ENCODE measurements at regions of chr16 and their contacts with region 1.

Region 1: GRCh38 chr16:73792199-73793020 is 504.2 kb upstream of the PSMD7 start:
- DNase-seq: no peak
- H3K4me3 ChIP-seq: no peak overlapping the region
- H3K27ac ChIP-seq: no peak overlapping the region
- H3K4me1 ChIP-seq: peaks cover 13 to 29% of the 10 kb centered on the region in 2 donors
- H3K27me3 ChIP-seq: no peaks in the 10 kb centered on the region
- CTCF ChIP-seq: no peak

Region 2: DNA sequence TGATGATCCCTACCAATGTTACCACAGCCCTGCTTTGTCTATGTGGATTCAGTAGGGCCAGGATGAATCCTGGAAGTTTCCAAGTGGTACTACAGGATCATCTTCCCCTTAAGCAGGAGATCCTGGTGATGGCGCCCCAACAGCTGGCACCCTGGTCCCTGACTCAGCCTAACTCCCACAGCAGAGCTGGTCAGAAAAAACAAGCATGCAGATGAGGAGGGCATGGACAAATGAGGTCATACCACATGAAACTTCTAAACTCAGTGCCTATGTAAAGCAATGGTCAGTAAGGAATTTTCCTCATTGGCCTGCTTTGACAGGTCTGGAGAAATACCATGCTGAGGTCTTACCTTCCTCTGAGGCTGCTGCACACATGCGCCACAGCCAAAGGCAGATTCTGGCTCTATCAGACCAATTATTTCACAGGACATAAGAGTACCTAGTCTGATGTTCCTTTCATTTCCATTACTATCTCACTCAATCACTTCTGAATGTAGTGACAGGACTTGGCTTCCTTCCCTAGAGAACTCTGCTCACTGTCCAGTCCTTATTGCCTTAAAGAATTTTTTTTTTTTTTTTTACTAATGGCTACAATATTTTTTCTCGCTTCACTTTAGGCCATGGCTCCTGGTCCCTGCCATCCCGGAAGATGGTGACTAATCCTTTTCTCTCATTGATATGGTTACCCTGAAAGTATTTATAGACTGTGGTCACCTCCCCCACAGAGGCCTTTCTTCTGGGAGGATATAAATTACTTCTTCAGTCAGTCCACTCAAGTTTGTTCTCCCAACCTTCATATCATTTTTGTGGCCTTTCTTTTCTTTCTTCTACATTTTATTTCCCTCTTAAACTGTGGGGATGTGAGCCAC is 21.0 kb before region 1 on chr16:
- intact Hi-C with region 1: loop called (anchors 2 kb)
- DNase-seq: no peak
- H3K4me3 ChIP-seq: no peak overlapping the region
- H3K27ac ChIP-seq: peak overlapping the region; percentile 64 to 82
- H3K4me1 ChIP-seq: peaks cover 15 to 41% of the 10 kb centered on the region in 2 donors
- H3K27me3 ChIP-seq: no peaks in the 10 kb centered on the region
- CTCF ChIP-seq: no peak

Region 3: GRCh38 chr16:74232806-74233465 is 440.5 kb after region 1 on chr16:
- intact Hi-C with region 1: no loop called
- DNase-seq: no peak
- H3K4me3 ChIP-seq: no peak overlapping the region
- H3K27ac ChIP-seq: no peak overlapping the region
- H3K4me1 ChIP-seq: no peaks in the 10 kb centered on the region
- H3K27me3 ChIP-seq: no peaks in the 10 kb centered on the region
- CTCF ChIP-seq: no peak

Measured in ascending aorta (tissue), 2 donors.